ENCODE measurements at regions of chr14 and their contacts with region 1.

Region 1: DNA sequence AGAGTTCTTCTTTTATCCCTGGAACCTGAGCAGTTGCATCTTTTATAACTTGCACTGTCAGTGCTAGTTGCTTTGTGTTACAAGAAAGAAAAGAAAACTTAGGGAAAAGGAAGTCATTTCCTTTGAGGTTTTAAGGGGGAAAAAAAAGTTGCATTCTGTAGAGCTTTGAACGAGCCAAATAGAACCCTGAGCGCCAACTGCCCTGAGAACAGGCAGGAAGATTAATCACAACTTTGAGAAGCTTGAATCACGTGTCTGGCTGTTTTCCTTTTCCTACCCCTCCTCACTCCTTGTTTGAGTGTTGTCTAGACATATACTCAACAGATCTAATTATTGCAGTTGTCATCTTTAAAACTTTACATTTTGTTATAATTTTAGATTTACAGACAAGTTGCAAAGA is 12.5 kb downstream of the PCNX1 start:
- DNase-seq: no peak
- H3K4me3 Mint-ChIP-seq: no peak overlapping the region
- H3K27ac Mint-ChIP-seq: no peak overlapping the region
- H3K4me1 Mint-ChIP-seq: peaks cover 77% of the 10 kb centered on the region
- H3K27me3 Mint-ChIP-seq: no peaks in the 10 kb centered on the region

Region 2: GRCh38 chr14:70955543-70956480 is 36.0 kb after region 1 on chr14:
- intact Hi-C with region 1: loop called (anchors 2 kb)
- DNase-seq: peak; percentile 19
- H3K4me3 Mint-ChIP-seq: no peak overlapping the region
- H3K27ac Mint-ChIP-seq: no peak overlapping the region
- H3K4me1 Mint-ChIP-seq: peaks cover 20% of the 10 kb centered on the region
- H3K27me3 Mint-ChIP-seq: no peaks in the 10 kb centered on the region